ENCODE measurements at regions of chr7 and their contacts with region 1.

Region 1: DNA sequence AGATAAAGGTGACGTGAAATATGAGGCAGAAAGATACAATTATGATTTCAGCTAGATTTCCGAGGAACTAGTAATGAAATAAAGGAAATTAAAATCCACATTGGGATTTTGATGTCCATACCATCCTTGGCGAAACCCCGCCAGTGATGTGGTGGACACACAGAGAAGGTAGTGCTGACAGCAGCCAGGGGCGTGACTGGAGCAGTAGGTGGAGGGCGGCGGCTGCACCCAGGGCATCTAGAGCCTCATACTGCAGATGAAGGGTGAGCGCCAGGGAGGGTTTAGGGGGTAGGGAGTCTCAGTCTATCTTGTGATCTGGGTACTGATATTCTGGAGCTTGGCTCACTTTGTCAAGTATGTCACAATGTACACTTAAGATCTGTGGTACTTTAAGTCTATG is 855.5 kb upstream of the POM121L12 start:
- DNase-seq: no peak
- ATAC-seq: no peak
- H3K4me3 ChIP-seq: no peak overlapping the region
- H3K27ac ChIP-seq: no peak overlapping the region
- H3K4me1 ChIP-seq: no peaks in the 10 kb centered on the region
- H3K27me3 ChIP-seq: no peaks in the 10 kb centered on the region
- CTCF ChIP-seq: no peak
- POLR2A ChIP-seq: no peak

Region 2: GRCh38 chr7:52119537-52119936 is 60.4 kb before region 1 on chr7:
- intact Hi-C with region 1: loop called (anchors 10 kb)
- DNase-seq: no peak
- ATAC-seq: no peak
- H3K4me3 ChIP-seq: no peak overlapping the region
- H3K27ac ChIP-seq: no peak overlapping the region
- H3K4me1 ChIP-seq: no peaks in the 10 kb centered on the region
- H3K27me3 ChIP-seq: no peaks in the 10 kb centered on the region
- CTCF ChIP-seq: no peak
- POLR2A ChIP-seq: no peak

Measured in body of pancreas (tissue), 4 donors.